Pancreas (tissue), 10 donors: ENCODE measurements at regions of chr14 and their contacts with region 1.

Region 1: DNA sequence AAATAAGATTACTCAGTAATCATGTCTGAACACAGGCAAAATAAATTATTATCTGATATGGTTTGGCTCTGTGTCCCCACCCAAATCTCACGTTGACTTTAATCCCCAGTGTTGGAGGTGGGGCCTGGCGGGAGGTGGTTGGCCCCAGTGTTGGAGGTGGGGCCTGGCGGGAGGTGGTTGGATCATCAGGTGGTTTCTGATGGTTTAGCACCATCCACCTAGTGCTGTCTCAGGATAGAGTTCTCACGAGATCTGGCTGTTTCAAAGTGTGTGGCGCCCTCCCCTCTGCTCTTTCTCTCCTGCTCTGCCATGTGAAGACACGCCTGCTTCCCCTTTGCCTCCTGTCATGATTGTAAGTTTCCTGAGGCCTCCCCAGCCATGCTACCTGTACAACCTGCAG is 18.1 kb downstream of the DHRS2 start:
- DNase-seq: no peak
- ATAC-seq: no peak
- H3K4me3 ChIP-seq: no peak overlapping the region
- H3K27ac ChIP-seq: no peak overlapping the region
- H3K4me1 ChIP-seq: no peaks in the 10 kb centered on the region
- H3K27me3 ChIP-seq: no peaks in the 10 kb centered on the region
- CTCF ChIP-seq: no peak

Region 2: GRCh38 chr14:23114669-23115491 is 539.4 kb before region 1 on chr14:
- intact Hi-C with region 1: no loop called
- DNase-seq: no peak
- ATAC-seq: peak in 2 of 4 donors; percentile 32 to 58
- H3K4me3 ChIP-seq: no peak overlapping the region
- H3K27ac ChIP-seq: no peak overlapping the region
- H3K4me1 ChIP-seq: no peaks in the 10 kb centered on the region
- H3K27me3 ChIP-seq: no peaks in the 10 kb centered on the region
- CTCF ChIP-seq: no peak

Region 3: DNA sequence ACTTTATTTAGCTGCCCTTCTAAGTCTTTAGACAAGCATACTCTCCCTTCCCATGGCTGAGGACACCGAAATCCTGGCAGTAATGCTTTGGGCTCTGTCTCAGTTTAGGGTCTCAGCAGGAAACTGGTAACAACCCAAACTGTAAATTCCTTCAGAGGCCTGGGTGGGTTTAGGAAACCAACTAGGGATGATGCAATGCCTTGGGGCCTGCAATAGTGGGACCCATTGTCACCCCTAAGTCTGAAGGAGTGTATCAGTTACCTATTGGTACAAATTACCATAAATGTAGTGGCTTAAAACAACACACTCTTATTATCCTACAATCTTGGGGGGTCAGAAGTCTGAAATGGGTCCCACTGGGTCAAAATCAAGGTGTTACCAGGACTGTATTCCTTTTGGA is 18.0 kb after region 1 on chr14:
- intact Hi-C with region 1: loop called in 1 of 3 experiments (anchors 2 kb)
- DNase-seq: no peak
- ATAC-seq: no peak
- H3K4me3 ChIP-seq: no peak overlapping the region
- H3K27ac ChIP-seq: no peak overlapping the region
- H3K4me1 ChIP-seq: no peaks in the 10 kb centered on the region
- H3K27me3 ChIP-seq: no peaks in the 10 kb centered on the region
- CTCF ChIP-seq: no peak